T-cell (primary cell): ENCODE measurements at regions of chr9 and their contacts with region 1.

Region 1: GRCh38 chr9:77177161-77177893 is at the start of gene VPS13A:
- DNase-seq: peak; percentile 76 to 95 (median 84)
- ATAC-seq: peak; percentile 87 to 92 (median 91)
- H3K4me3 ChIP-seq: peak within 1 kb of the TSS; percentile 80 to 96
- H3K4me3 Mint-ChIP-seq: peak within 1 kb of the TSS; percentile 95 to 97 (median 97)
- H3K27ac ChIP-seq: peak within 1 kb of the TSS; percentile 86
- H3K27ac Mint-ChIP-seq: peak within 1 kb of the TSS; percentile 93 to 94
- H3K4me1 ChIP-seq: peaks cover 3 to 16% of the 10 kb centered on the region in 2 experiments
- H3K4me1 Mint-ChIP-seq: peaks cover 35 to 38% (median 36%) of the 10 kb centered on the region in 3 donors
- H3K27me3 ChIP-seq: no peaks in the 10 kb centered on the region
- H3K27me3 Mint-ChIP-seq: no peaks in the 10 kb centered on the region
- total RNA-seq, gene VPS13A: 32.1 to 49.3 (median 36.5) TPM

Region 2: DNA sequence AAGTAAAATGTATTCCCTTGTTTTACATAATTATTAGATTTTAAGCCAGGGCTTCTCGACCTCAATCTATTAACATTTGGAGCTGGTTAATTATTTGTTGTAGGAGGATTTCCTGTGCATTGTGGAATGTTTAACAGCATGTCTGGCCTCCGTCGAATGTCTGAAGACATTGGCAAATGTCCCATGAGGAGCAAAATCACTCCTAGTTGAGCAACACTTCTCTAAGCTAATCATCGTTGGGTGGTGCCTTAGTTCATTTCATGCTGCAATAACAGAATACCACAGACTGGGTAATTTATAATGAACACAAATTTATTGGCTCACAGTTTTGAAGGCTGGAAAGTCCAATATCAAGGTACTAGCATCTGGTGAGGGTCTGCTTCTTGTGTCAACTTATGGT is 13.4 kb before region 1 on chr9:
- CTCF ChIA-PET with region 1: interaction called, 14 to 21 read pairs
- POLR2A ChIA-PET with region 1: no interaction called
- DNase-seq: no peak
- ATAC-seq: no peak
- H3K4me3 ChIP-seq: no peak overlapping the region
- H3K4me3 Mint-ChIP-seq: no peak overlapping the region
- H3K27ac ChIP-seq: no peak overlapping the region
- H3K27ac Mint-ChIP-seq: no peak overlapping the region
- H3K4me1 ChIP-seq: no peaks in the 10 kb centered on the region
- H3K4me1 Mint-ChIP-seq: peaks cover 0 to 2% (median 0%) of the 10 kb centered on the region in 3 donors
- H3K27me3 ChIP-seq: peaks cover 0 to 2% of the 10 kb centered on the region in 2 experiments
- H3K27me3 Mint-ChIP-seq: peaks cover 6 to 8% of the 10 kb centered on the region in 2 donors

Region 3: DNA sequence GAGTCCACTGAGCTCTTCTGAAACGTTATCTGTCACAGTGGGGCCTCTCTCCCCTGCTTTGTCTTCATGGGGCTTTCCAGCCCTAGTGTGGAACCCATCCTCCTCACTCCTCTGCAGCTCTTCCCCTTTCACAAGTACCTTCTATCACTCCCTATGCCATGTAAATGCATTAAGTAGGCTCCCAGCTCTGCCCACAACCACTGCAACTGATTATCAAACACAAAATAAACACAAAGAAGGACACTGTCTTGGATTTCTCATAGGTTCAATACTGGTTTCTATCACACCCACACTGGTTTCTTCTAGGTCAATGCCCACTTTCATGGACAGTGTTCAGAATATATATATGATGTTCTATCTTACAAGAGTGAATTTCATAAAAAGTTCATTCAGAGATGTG is 714.8 kb after region 1 on chr9:
- CTCF ChIA-PET with region 1: interaction called in 1 of 2 experiments, 14 read pairs
- POLR2A ChIA-PET with region 1: no interaction called
- DNase-seq: no peak
- ATAC-seq: no peak
- H3K4me3 ChIP-seq: no peak overlapping the region
- H3K4me3 Mint-ChIP-seq: no peak overlapping the region
- H3K27ac ChIP-seq: no peak overlapping the region
- H3K27ac Mint-ChIP-seq: peak overlapping the region in 1 of 2 donors; percentile 44
- H3K4me1 ChIP-seq: peaks cover 2 to 8% of the 10 kb centered on the region in 2 experiments
- H3K4me1 Mint-ChIP-seq: peaks cover 15 to 34% (median 15%) of the 10 kb centered on the region in 3 donors
- H3K27me3 ChIP-seq: no peaks in the 10 kb centered on the region
- H3K27me3 Mint-ChIP-seq: no peaks in the 10 kb centered on the region